Aorta (tissue), 5 donors: ENCODE measurements at regions of chr9 and their contacts with region 1.

Region 1: DNA sequence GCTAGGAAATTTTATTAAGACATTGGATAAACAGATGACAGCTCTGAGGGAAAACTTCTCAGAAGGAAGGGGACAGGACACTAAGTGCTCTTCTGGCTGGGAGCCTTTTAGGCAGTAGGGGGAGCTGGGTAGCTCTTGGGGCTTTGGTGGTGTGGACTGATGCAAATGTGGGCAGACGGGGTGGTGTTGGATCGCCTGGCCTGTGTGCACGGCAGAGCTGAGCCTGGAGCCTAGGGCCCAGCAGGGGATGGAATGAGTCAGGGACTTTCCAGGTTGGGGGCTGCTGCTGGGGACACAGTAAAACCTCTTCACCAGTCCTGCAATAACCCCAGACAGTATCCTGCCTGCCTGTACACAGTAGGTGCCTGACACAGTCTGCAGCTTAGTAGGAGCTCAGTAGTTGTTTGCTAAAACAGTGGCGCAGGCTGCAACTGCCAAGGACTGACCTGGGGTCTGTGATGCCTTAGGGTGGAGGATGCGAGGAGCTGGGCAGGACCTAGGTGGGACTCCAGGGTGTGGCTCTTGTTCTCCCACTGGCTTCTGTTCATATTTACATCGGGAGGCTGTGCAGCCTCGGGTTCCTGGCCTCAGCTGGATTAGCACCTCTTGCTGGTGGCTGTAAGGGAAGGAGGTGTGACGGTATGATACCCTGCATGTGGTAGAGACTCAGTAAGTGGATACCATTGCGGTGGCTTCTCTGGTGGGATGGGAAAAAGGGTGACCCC is 83.8 kb downstream of the DAB2IP start:
- DNase-seq: no peak
- ATAC-seq: no peak
- H3K4me3 ChIP-seq: no peak overlapping the region
- H3K27ac ChIP-seq: peak overlapping the region; percentile 65 to 88
- H3K4me1 ChIP-seq: peaks cover 0 to 4% of the 10 kb centered on the region in 2 donors
- H3K27me3 ChIP-seq: no peaks in the 10 kb centered on the region

Region 2: DNA sequence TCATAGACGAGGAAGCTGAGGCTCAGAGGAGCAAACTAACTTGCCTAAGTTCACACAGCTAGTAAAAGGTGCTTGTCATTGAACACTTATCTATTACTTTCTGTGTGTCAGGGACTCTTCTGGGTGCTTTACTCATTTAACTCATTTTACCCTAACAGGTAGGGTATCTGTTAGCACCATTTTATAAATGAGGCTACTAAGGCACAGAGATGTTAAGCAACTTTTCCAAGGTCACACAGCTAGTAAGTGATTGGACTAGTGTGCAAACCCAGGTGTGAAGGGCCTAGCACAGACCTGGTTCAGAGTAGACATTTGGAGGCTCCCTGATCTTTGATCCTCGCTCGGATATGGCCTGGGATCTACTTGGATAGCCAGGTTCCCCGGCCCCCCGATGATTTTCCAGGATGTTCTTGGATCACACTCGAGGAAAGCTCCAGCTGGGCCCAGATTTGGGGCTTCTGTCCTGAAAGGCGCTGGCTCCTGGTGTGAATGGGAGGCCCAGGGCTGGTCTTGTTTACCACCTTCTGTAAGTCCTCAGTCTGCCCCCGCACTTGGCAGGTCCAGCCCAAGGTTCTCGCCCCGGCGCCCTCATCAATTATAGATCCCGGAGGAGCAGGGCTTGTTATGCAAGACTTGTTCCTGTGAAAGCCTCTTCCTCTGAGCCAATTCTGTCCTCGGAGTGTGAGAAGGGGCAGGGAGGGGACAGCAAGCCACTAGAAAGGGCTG is 429.8 kb before region 1 on chr9:
- intact Hi-C with region 1: no loop called
- DNase-seq: peak; percentile 79 to 85
- ATAC-seq: peak; percentile 71
- H3K4me3 ChIP-seq: no peak overlapping the region
- H3K27ac ChIP-seq: peak overlapping the region; percentile 33 to 49
- H3K4me1 ChIP-seq: peaks cover 0 to 3% of the 10 kb centered on the region in 2 donors
- H3K27me3 ChIP-seq: no peaks in the 10 kb centered on the region

Region 3: DNA sequence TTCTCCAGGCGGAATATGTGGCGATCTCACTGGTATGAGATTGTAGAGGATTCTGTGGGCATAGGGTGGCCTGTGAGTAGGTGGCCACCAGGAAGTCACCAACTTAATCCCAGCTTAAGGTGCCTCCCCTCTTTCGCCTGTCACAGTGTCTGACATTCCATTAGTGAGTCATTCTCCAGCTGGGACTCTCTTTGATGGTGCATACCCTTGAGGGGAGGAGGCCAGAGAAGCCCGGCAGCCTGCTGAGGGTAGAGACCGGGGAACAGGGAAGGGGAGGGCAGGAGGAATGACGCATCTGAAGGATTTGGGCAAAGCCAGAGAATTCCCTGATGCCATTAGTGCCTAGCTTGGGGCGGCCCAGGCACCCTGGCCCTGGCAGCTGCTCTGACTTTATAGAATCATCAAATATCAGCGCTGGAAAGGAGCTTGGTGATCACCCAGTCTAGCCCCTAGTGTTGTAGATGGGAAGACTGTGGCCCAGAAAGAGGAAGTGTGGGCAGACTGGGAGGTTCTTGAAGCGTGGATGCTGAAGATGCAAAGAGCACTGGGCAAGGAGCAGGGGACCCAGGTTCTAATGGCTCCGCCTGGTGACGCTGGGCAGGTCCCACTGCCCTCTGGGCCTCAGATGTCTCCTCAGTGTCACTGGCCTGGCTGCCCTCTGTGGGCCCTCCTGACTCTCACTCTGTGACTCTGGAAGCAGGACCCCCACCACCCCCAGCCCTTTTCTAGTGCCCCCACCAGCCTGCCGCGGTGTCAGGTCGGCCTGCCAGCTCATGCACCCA is 42.4 kb before region 1 on chr9:
- intact Hi-C with region 1: loop called in 1 of 2 experiments (anchors 5 kb)
- DNase-seq: peak; percentile 75 to 85
- ATAC-seq: peak; percentile 73
- H3K4me3 ChIP-seq: no peak overlapping the region
- H3K27ac ChIP-seq: peak overlapping the region in 1 of 2 donors; percentile 84
- H3K4me1 ChIP-seq: no peaks in the 10 kb centered on the region
- H3K27me3 ChIP-seq: no peaks in the 10 kb centered on the region

Region 4: GRCh38 chr9:121698627-121699570 is 36.3 kb before region 1 on chr9:
- intact Hi-C with region 1: loop called (anchors 5 kb)
- DNase-seq: peak; percentile 74 to 88
- ATAC-seq: peak; percentile 3
- H3K4me3 ChIP-seq: peak overlapping the region; percentile 32 to 59
- H3K27ac ChIP-seq: no peak overlapping the region
- H3K4me1 ChIP-seq: no peaks in the 10 kb centered on the region
- H3K27me3 ChIP-seq: no peaks in the 10 kb centered on the region

Region 5: DNA sequence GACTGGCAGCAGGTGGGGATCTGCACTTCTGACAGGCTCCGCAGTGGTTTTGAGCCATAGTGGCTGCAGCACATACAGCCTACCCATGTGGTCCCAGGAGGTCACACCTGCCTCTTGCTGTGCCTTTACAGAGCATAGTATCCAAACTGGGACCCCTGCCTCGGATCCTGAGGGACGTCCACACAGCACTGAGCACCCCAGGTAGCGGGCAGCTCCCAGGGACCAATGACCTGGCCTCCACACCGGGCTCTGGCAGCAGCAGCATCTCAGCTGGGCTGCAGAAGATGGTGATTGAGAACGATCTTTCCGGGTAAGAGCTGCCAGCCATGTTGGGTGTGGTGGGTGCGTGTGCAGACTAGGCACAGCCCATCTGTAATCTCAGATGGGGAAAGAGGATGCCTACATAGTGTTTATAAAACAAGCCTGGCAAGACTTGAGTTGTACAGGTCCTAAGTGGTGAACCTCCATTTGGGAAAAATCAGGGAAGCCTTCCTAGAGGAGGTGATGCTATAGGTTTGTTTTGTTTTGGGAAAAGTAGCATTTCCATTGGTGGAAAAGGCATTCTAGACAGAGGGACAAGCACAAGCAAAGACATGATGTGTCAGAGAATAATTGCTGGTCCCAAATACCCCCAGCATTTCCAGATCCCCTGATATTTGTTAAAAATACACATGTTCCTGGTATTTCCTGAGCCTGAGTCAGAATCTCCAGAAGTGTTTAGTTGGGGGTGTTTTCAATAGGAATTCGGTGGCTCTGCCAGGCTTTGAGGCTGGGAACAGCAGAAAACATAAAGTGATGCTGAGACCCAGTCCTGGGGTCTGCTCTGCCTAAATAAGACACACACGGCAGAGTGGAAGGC is 35.4 kb after region 1 on chr9:
- intact Hi-C with region 1: loop called in 1 of 2 experiments (anchors 5 kb)
- DNase-seq: peak; percentile 42 to 52
- ATAC-seq: no peak
- H3K4me3 ChIP-seq: no peak overlapping the region
- H3K27ac ChIP-seq: peak overlapping the region; percentile 62 to 93
- H3K4me1 ChIP-seq: no peaks in the 10 kb centered on the region
- H3K27me3 ChIP-seq: no peaks in the 10 kb centered on the region

Region 6: GRCh38 chr9:121798941-121799340 is 63.7 kb after region 1 on chr9:
- intact Hi-C with region 1: no loop called
- DNase-seq: no peak
- ATAC-seq: no peak
- H3K4me3 ChIP-seq: no peak overlapping the region
- H3K27ac ChIP-seq: no peak overlapping the region
- H3K4me1 ChIP-seq: no peaks in the 10 kb centered on the region
- H3K27me3 ChIP-seq: no peaks in the 10 kb centered on the region

Region 7: GRCh38 chr9:122020398-122020797 is 285.2 kb after region 1 on chr9:
- intact Hi-C with region 1: no loop called
- DNase-seq: no peak
- ATAC-seq: peak; percentile 48
- H3K4me3 ChIP-seq: no peak overlapping the region
- H3K27ac ChIP-seq: peak overlapping the region; percentile 72 to 97
- H3K4me1 ChIP-seq: peaks cover 0 to 6% of the 10 kb centered on the region in 2 donors
- H3K27me3 ChIP-seq: no peaks in the 10 kb centered on the region